WTC11 (cell line): ENCODE measurements at regions of chr19 and their contacts with region 1.

Region 1: GRCh38 chr19:48403606-48404005 is 10.1 kb downstream of the GRIN2D start:
- DNase-seq: peak; percentile 71
- ATAC-seq: peak; percentile 33
- H3K4me3 Mint-ChIP-seq: no peak overlapping the region
- H3K27ac Mint-ChIP-seq: peak overlapping the region; percentile 96
- H3K4me1 Mint-ChIP-seq: peaks cover 56% of the 10 kb centered on the region
- H3K27me3 Mint-ChIP-seq: no peaks in the 10 kb centered on the region; the same call in 1 of the 2 replicates
- CTCF ChIP-seq: no peak

Region 2: DNA sequence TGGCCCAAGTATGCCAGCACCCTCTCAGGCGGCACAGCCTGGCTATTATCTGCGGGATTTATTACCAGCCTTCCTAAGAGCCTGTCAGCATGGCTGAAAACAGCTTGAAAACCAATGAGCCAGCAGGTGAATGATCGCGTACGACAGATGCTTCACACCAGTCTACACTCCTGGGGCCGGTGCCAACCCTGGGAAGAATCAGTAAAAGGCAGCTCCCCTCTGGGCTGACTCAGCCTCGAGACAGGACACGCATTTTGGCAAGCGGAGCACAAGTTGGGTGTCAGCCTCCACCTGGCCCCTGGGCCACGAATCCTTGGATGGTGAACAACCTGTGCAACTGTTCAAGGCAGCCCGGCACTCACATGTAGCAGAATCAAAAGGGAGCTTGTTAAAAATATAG is 62.6 kb before region 1 on chr19:
- CTCF ChIA-PET with region 1: no interaction called
- POLR2A ChIA-PET with region 1: no interaction called
- DNase-seq: no peak
- ATAC-seq: no peak
- H3K4me3 Mint-ChIP-seq: no peak overlapping the region
- H3K27ac Mint-ChIP-seq: no peak overlapping the region
- H3K4me1 Mint-ChIP-seq: no peaks in the 10 kb centered on the region
- H3K27me3 Mint-ChIP-seq: no peaks in the 10 kb centered on the region; the same call in 1 of the 2 replicates
- CTCF ChIP-seq: no peak

Region 3: GRCh38 chr19:48419158-48419920 is 15.7 kb after region 1 on chr19:
- CTCF ChIA-PET with region 1: interaction called, 33 read pairs
- POLR2A ChIA-PET with region 1: interaction called, 27 read pairs
- DNase-seq: peak; percentile 88
- ATAC-seq: peak; percentile 55
- H3K4me3 Mint-ChIP-seq: peak overlapping the region; percentile 36
- H3K27ac Mint-ChIP-seq: peak overlapping the region; percentile 87
- H3K4me1 Mint-ChIP-seq: peaks cover 21% of the 10 kb centered on the region
- H3K27me3 Mint-ChIP-seq: no peaks in the 10 kb centered on the region
- CTCF ChIP-seq: no peak

Region 4: GRCh38 chr19:48455908-48456562 is 52.4 kb after region 1 on chr19:
- CTCF ChIA-PET with region 1: no interaction called
- POLR2A ChIA-PET with region 1: no interaction called
- DNase-seq: no peak
- ATAC-seq: no peak
- H3K4me3 Mint-ChIP-seq: no peak overlapping the region
- H3K27ac Mint-ChIP-seq: no peak overlapping the region
- H3K4me1 Mint-ChIP-seq: no peaks in the 10 kb centered on the region
- H3K27me3 Mint-ChIP-seq: no peaks in the 10 kb centered on the region
- CTCF ChIP-seq: no peak